Right ventricle myocardium superior (tissue), 1 donor: ENCODE measurements at regions of chr7 and their contacts with region 1.

Region 1: DNA sequence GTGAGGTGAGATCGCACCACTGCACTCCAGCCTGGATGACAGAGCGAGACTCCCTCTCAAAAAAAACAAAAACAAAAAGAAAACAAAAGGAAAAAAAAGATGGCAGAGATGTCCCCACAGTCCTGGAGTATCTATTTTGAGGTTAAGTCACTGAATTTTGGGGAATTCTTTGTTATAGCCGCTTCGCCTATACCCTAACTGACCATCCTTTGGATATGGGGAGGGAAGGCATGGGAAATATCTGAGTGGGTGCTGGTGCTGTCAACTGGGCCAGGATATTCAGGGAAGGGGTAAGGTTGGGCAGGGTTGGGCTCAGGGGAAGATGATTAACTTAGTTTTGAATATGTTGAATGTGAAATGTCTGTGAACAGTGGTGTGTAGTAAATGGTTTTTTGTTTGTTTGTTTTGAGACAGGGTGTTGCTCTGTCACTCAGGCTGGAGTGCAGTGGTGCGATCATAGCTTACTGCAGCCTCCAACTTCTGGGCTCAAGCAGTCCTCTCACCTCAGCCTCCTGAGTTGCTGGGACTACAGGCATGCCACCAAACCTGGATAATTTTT is 8.3 kb upstream of the GNB2 start:
- DNase-seq: no peak
- ATAC-seq: no peak

Region 2: GRCh38 chr7:100626530-100627237 is 38.6 kb before region 1 on chr7:
- intact Hi-C with region 1: loop called (anchors 5 kb)
- DNase-seq: peak; percentile 88
- ATAC-seq: peak; percentile 97

Region 3: GRCh38 chr7:100929780-100930135 is 264.5 kb after region 1 on chr7:
- intact Hi-C with region 1: no loop called
- DNase-seq: no peak
- ATAC-seq: no peak